Breast epithelium (tissue), 4 donors: ENCODE measurements at regions of chr4 and their contacts with region 1.

Region 1: GRCh38 chr4:17810260-17811077 is at the starts of genes DCAF16 and NCAPG:
- DNase-seq: peak; percentile 98
- H3K4me3 ChIP-seq: peak within 1 kb of the TSS; percentile 83 to 92 (median 87)
- H3K27ac ChIP-seq: peak within 1 kb of the TSS; percentile 95 to 98
- H3K4me1 ChIP-seq: peaks cover 0 to 10% of the 10 kb centered on the region in 2 donors
- H3K27me3 ChIP-seq: no peaks in the 10 kb centered on the region
- CTCF ChIP-seq: no peak
- POLR2A ChIP-seq: peak; percentile 95
- total RNA-seq, gene DCAF16: 28.0 to 41.3 (median 28.2) TPM
- total RNA-seq, gene NCAPG: 0.33 to 0.96 (median 0.59) TPM

Region 2: GRCh38 chr4:15901998-15902397 is 1908.5 kb before region 1 on chr4:
- intact Hi-C with region 1: loop called (anchors 5 kb)
- DNase-seq: no peak
- H3K4me3 ChIP-seq: no peak overlapping the region
- H3K27ac ChIP-seq: no peak overlapping the region
- H3K4me1 ChIP-seq: no peaks in the 10 kb centered on the region
- H3K27me3 ChIP-seq: no peaks in the 10 kb centered on the region
- CTCF ChIP-seq: no peak
- POLR2A ChIP-seq: no peak

Region 3: DNA sequence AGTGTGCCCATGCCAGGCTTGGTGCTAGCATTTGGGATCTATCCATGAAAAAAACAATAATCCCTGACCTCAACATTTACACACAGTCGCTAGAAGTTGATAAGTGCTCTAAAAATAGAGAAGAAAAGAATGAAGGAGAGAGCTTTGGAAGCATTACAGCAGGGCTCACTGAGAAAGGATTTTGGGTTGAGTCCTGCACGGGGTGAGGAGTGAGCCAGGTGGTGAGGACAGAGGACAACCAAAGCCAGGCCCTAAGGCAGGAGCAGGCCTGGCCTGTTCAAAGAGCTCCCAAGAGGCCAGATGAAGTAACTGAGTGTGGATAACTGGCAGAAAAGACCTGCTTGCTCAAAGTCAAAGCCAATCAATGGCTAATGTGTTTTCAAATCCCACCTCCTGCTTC is 1705.9 kb before region 1 on chr4:
- intact Hi-C with region 1: loop called (anchors 10 kb)
- DNase-seq: no peak
- H3K4me3 ChIP-seq: no peak overlapping the region
- H3K27ac ChIP-seq: no peak overlapping the region
- H3K4me1 ChIP-seq: no peaks in the 10 kb centered on the region
- H3K27me3 ChIP-seq: no peaks in the 10 kb centered on the region
- CTCF ChIP-seq: no peak
- POLR2A ChIP-seq: no peak

Region 4: DNA sequence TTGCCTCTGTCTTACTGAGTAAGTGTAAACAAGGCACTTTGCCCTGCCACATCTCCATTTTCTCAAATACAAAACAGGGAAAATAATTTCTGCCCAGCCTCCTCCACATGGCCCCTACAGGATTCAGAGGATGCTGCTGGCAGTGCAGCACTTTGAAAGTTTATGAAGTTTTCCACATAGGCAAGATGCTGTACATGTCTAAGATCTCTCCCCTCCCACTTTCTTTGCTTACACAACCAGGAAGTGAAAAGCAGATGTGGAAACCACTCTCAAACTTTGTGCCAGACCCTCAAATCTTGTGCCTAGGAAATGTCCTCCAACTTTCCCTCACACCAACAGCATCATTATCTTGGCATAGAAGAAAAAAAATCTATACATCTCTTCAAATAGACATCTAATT is 655.0 kb before region 1 on chr4:
- intact Hi-C with region 1: no loop called
- DNase-seq: no peak
- H3K4me3 ChIP-seq: no peak overlapping the region
- H3K27ac ChIP-seq: no peak overlapping the region
- H3K4me1 ChIP-seq: no peaks in the 10 kb centered on the region
- H3K27me3 ChIP-seq: no peaks in the 10 kb centered on the region
- CTCF ChIP-seq: no peak
- POLR2A ChIP-seq: no peak

Region 5: DNA sequence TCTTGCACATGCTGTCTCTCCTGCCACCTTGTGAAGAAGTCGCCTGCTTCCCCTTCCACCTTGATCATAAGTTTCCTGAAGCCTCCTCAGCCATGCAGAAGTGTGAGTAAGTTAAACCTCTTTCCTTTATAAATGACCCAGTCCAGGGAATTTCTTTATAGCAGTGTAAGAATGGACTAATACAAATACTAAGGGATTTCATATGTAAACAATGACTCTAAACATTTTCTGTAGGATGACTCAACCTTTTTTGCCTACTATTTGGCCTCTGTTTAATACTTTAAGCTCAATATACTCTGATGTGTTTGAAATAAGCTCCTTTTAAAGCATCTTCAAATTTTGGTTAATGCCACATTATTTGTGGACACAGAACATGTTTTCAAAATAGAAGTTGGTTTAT is 1627.8 kb after region 1 on chr4:
- intact Hi-C with region 1: no loop called
- DNase-seq: no peak
- H3K4me3 ChIP-seq: no peak overlapping the region
- H3K27ac ChIP-seq: no peak overlapping the region
- H3K4me1 ChIP-seq: no peaks in the 10 kb centered on the region
- H3K27me3 ChIP-seq: no peaks in the 10 kb centered on the region
- CTCF ChIP-seq: no peak
- POLR2A ChIP-seq: no peak